ENCODE measurements at regions of chrX and their contacts with region 1.

Region 1: DNA sequence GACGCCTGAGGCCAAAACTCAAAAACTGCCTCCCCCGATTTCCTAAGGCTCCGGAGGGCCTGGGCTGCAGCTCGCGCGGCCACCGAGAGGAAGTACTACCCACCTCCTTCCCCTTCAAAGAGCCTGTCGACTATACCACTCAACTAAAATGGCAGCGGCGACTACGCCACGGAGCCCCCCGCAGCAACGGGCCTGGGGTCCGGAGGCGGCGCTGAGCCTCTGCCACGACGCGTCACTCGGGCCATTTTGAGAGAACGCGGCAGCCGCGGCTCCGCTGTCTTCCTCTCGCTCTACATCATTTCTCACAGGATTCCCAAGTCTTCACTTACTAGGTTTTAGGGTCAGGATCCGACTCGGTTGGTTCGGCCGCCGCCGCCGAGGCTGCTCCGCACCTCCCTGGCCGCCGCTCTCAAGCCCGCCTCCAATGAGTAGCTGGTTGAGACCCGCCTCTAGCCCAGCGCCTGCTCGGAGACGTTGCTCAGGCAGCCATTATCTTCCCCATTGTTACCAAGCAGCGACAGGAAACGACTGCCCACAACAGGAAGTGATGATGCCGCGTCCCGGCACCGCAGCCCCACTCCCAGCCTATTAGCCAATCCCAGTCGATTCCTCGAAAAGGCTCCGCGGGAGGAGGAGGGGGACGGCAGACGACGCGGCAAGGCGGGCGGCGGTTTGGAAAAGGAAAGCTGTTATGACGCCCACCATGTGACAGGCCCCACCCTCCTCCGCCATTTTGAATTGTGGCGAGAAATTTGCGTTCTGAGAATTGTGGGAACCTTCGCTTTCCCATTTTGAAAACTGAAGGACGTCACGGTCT is at the start of gene RLIM:
- DNase-seq: peak; percentile 97
- H3K4me3 Mint-ChIP-seq: peak within 1 kb of the TSS; percentile 100
- H3K27ac Mint-ChIP-seq: peak within 1 kb of the TSS; percentile 100
- H3K4me1 Mint-ChIP-seq: peaks cover 8% of the 10 kb centered on the region
- H3K27me3 Mint-ChIP-seq: no peaks in the 10 kb centered on the region
- total RNA-seq, gene RLIM: 34.2 and 34.5 TPM in 2 replicates

Region 2: DNA sequence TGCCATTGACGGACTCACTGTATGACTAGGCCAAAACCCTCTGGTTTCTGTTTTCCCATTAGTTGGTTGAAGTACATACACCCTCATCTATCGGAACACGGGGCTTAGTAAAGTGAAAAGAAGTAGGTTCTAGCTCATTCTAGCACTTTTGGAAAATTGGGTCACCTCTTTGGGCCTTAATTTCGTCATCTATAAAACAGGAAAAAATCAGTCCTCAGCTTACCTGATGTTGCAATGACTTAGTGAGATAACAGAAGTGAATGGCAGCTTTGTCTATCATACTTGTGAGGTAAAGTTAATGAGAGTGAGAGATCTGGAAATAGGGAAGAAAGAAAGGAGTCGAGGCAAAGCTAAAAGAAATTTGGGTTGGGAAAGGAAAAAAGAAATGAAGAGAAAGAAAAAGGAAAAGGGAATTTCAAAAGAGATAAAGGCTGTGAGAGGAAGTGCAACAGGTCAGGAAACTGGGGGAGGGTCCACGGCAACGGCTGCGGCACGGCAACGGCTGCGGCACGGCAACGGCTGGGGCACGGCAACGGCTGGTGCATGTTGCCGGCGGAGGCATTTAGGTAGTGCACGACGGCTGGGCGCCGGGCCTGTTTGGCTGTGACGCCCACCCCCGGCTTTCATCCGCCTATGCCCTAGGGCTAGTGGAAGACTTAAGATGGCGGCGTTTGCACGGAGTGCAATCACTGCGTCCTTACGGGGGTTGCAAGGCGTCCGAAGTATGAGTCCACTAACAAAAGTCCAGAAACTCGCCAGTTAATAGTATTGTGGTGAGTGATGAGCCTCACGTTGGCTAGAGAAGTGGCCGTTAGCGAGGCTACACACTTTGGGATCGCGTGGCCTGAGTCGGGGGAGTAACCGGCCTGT is 670.4 kb before region 1 on chrX:
- intact Hi-C with region 1: loop called (anchors 5 kb)
- DNase-seq: peak; percentile 95
- H3K4me3 Mint-ChIP-seq: peak overlapping the region; percentile 86
- H3K27ac Mint-ChIP-seq: peak overlapping the region; percentile 90
- H3K4me1 Mint-ChIP-seq: peaks cover 18% of the 10 kb centered on the region
- H3K27me3 Mint-ChIP-seq: no peaks in the 10 kb centered on the region

Region 3: GRCh38 chrX:74536152-74536831 is 78.0 kb before region 1 on chrX:
- intact Hi-C with region 1: loop called (anchors 1 kb)
- DNase-seq: peak; percentile 75
- H3K4me3 Mint-ChIP-seq: peak overlapping the region; percentile 78
- H3K27ac Mint-ChIP-seq: peak overlapping the region; percentile 82
- H3K4me1 Mint-ChIP-seq: peaks cover 20% of the 10 kb centered on the region
- H3K27me3 Mint-ChIP-seq: no peaks in the 10 kb centered on the region

Region 4: GRCh38 chrX:74579597-74580198 is 34.6 kb before region 1 on chrX:
- intact Hi-C with region 1: loop called (anchors 1 kb)
- DNase-seq: no peak
- H3K4me3 Mint-ChIP-seq: no peak overlapping the region
- H3K27ac Mint-ChIP-seq: peak overlapping the region; percentile 80
- H3K4me1 Mint-ChIP-seq: peaks cover 9% of the 10 kb centered on the region
- H3K27me3 Mint-ChIP-seq: no peaks in the 10 kb centered on the region

Region 5: GRCh38 chrX:74924449-74925225 is 310.3 kb after region 1 on chrX:
- intact Hi-C with region 1: loop called (anchors 10 kb)
- DNase-seq: peak; percentile 77
- H3K4me3 Mint-ChIP-seq: peak overlapping the region; percentile 87
- H3K27ac Mint-ChIP-seq: peak overlapping the region; percentile 89
- H3K4me1 Mint-ChIP-seq: peaks cover 5% of the 10 kb centered on the region
- H3K27me3 Mint-ChIP-seq: peaks cover 21% of the 10 kb centered on the region

Region 6: DNA sequence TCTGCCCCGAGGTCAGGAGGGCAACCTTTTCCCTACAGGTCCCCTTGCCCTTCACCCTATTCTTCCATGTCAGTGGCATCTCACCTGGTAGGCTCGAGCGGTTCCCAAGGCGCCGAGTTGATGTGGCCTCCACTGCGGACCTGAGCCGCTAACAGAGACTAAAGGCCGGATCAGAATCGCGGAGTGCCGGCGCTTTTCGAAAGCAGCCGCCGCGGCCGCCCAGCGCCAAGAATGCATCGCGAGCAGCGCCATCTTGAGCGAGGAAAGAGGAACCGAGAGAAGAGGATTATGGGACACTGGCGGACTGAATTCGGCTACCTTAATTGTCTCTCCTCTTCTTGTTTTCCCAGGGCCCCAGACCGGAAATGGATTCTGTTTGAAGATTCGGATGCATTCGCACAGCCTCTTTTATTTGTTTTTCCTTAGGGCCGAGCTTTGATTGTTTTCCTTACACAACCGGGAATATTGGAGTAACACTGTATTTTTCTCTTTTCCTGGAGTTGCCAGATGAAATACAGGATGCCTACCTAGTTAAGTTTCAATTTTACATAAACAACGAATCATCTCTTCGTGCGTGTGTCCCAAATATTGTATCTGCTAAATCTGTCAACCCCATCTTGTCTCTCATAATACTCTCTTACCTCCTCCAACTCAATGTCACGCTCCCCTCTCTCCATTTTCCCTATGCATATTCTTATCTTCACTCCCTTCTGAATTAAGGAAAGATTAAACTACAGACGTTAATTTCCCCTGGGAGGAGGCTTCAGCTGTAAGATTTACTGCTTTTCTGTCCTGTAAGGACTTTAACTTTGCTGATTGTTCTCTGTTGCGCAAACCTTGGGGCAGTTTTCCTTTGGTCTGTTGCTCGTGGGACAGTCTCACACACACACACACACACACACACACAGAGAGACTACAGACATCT is 542.0 kb after region 1 on chrX and contains the start of gene ABCB7:
- intact Hi-C with region 1: loop called (anchors 2 kb)
- DNase-seq: peak; percentile 89
- H3K4me3 Mint-ChIP-seq: peak within 1 kb of the TSS; percentile 90
- H3K27ac Mint-ChIP-seq: peak within 1 kb of the TSS; percentile 93
- H3K4me1 Mint-ChIP-seq: peaks cover 28% of the 10 kb centered on the region
- H3K27me3 Mint-ChIP-seq: no peaks in the 10 kb centered on the region
- total RNA-seq, gene ABCB7: 37.4 and 45.7 TPM in 2 replicates

Region 7: DNA sequence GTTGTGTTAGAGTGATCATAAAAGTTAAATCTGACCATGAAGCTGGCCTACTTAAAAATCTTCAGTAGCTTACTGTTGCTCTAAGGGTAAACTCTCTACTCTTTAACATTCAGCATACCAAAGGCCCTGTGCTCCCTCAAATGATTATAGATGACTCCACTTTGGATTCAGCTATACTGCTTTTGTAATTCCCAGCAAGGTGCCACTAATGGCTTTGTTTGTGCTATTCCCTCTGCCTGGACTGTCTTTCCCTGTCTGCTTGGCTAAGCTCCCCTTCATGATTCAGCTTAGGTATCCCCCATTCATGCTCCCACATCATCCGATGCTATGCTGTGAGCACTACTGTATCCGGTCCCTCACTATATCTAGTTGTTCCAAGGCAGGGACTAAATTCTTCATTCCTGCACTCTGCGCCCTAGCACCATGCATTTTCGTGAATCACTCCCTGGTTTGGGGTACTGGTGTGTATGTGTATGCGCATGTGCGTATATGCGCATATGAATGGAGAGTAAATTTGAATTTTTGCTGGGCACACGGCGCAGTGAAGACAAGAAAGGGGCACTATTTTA is 1558.1 kb after region 1 on chrX:
- intact Hi-C with region 1: loop called (anchors 10 kb)
- DNase-seq: no peak
- H3K4me3 Mint-ChIP-seq: peak overlapping the region; percentile 94
- H3K27ac Mint-ChIP-seq: peak overlapping the region; percentile 99
- H3K4me1 Mint-ChIP-seq: peaks cover 37% of the 10 kb centered on the region
- H3K27me3 Mint-ChIP-seq: no peaks in the 10 kb centered on the region

Measured in activated CD4-positive, alpha-beta T cell treated with anti-CD3 and anti-CD28 coated beads, Interleukin-2, amount 10 ng/mL, durations not matched to agents 24 days and 14 days (primary cell).